ENCODE measurements at regions of chr10 and their contacts with region 1.

Region 1: GRCh38 chr10:86936661-86937501 is 20.5 kb downstream of the MMRN2 start:
- DNase-seq: no peak
- ATAC-seq: no peak
- H3K4me3 Mint-ChIP-seq: no peak overlapping the region
- H3K27ac Mint-ChIP-seq: no peak overlapping the region
- H3K4me1 Mint-ChIP-seq: no peaks in the 10 kb centered on the region
- H3K27me3 Mint-ChIP-seq: no peaks in the 10 kb centered on the region

Region 2: DNA sequence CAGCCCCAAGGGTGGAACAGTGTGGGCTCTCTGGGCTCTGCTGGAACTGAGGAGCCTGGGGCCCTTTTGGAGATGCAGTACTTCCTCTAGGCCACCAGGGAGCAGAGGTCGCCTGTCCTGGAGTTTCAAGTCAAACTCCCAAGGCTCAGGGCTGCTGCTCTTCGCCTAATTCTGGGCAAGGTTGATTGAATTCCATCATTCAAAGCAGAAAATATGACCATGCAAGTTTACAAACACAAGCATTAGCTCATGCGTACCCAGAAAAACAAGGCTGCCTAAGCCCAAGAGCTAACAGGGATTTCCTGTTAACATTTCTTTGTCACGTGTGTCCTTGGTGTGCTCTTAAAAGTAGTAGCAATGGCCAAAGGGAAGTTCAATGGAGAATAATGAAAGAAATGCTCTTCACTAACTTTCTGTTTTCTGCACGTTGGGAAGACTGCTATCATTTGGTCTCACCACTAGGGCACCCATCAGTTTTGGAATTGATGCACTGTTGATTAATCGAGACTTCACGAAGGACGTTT is 248.4 kb before region 1 on chr10:
- CTCF ChIA-PET with region 1: no interaction called
- POLR2A ChIA-PET with region 1: no interaction called
- intact Hi-C with region 1: loop called in 1 of 2 experiments (anchors 1 kb)
- DNase-seq: peak; percentile 72
- ATAC-seq: peak; percentile 94
- H3K4me3 Mint-ChIP-seq: no peak overlapping the region
- H3K27ac Mint-ChIP-seq: no peak overlapping the region
- H3K4me1 Mint-ChIP-seq: no peaks in the 10 kb centered on the region
- H3K27me3 Mint-ChIP-seq: no peaks in the 10 kb centered on the region

Region 3: DNA sequence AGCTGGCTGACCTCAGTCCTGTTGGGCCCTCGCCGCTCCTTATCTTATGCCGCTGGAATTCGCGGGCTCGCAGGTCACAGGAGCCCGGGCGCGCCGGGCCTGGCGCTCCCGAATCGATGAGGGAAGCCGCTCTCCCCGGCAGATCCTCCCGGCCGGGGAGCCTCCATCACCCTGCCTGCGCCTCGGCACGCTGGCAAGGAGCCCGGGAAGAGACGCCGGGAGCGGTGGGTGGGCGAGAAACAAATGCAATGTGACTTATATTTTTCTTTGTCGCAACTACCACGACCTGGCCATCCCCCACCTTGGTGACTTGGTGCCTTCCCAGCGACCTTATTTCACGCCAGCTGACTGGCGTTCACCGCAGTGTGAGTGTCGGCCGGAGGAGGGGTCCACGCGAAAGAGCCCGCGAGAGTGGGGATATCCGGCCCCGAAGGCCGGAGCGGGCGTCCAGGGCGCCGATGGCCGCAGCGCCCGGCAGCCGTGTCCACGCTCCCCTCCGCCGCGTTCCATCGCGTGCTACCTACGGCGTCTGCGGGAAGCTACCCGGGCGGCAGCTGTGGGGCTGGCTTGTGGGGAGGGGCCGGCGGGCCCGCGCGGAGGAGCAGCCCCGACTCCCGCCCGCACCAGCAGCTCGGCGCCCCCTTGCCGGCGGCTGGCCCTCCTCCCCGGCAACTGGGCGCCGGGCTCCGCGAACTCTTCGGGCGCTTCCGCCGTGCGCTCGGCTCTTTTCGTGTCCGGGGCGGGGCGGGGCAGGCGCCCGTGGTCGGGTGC is 181.0 kb before region 1 on chr10:
- CTCF ChIA-PET with region 1: interaction called, 3 read pairs
- POLR2A ChIA-PET with region 1: interaction called, 8 read pairs
- intact Hi-C with region 1: loop called in 1 of 2 experiments (anchors 1 kb)
- DNase-seq: peak; percentile 93
- ATAC-seq: peak; percentile 96
- H3K4me3 Mint-ChIP-seq: peak overlapping the region; percentile 85
- H3K27ac Mint-ChIP-seq: peak overlapping the region; percentile 72
- H3K4me1 Mint-ChIP-seq: peaks cover 33% of the 10 kb centered on the region
- H3K27me3 Mint-ChIP-seq: peaks cover 26% of the 10 kb centered on the region

Region 4: GRCh38 chr10:86960003-86960862 is 23.4 kb after region 1 on chr10:
- CTCF ChIA-PET with region 1: interaction called, 19 read pairs
- POLR2A ChIA-PET with region 1: no interaction called
- intact Hi-C with region 1: loop called in 1 of 2 experiments (anchors 1 kb)
- DNase-seq: peak; percentile 69
- ATAC-seq: peak; percentile 94
- H3K4me3 Mint-ChIP-seq: no peak overlapping the region
- H3K27ac Mint-ChIP-seq: no peak overlapping the region
- H3K4me1 Mint-ChIP-seq: no peaks in the 10 kb centered on the region
- H3K27me3 Mint-ChIP-seq: no peaks in the 10 kb centered on the region

Region 5: DNA sequence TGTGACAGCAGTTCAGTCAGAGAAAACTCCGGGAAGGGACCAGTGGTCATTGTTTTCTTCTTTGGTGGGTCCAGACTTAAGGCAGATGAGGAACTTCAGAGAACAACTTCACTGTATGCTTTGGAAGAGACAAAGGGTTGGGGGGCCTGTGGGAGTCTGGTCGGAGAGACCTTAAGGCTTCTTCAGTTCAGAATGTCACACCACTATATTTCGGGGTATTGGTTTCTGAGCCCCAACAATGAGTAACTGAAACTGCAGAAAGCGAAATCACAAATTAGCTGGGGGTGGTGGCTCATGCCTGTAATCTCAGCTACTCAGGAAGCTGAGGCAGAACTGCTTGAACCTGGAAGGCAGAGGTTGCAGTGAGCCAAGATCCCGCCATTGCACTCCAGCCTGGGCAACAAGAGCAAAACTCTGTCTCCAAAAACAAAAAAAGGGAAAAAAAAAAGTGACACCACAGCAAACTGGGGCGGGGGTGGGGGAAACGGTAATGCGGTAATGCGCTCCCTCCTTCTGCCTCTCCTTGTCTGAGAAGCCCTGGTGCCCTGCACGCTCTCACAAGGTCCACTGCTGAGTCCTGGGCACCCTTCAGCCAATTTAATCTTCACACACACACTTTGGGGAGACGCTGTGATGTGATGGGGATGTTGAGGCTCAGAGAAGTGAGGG is 29.2 kb after region 1 on chr10:
- CTCF ChIA-PET with region 1: interaction called, 18 read pairs
- POLR2A ChIA-PET with region 1: no interaction called
- intact Hi-C with region 1: loop called in 1 of 2 experiments (anchors 1 kb)
- DNase-seq: no peak
- ATAC-seq: peak; percentile 7
- H3K4me3 Mint-ChIP-seq: peak overlapping the region; percentile 6
- H3K27ac Mint-ChIP-seq: peak overlapping the region; percentile 67
- H3K4me1 Mint-ChIP-seq: peaks cover 26% of the 10 kb centered on the region
- H3K27me3 Mint-ChIP-seq: peaks cover 6% of the 10 kb centered on the region